ENCODE measurements at regions of chr14 and their contacts with region 1.

Region 1: DNA sequence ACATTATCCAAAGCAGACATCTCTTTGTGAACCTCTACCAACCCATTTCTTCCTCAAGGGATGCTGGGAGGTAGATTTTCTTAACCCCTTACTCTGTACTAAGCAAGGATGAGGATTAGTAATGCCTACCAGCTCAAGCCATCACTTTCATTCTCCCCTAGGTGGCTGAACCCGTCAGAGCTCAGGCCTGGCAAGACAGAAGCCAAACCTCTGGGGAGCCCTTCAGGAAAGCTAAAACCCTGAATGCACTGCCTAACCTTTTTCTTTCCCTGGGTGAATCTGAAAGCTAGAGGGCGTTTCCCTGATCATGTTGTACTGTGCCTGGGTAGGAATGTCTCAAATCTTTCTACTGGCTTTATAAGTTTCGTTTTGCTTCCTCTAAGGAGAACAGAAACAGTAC is 617.3 kb downstream of the RPL10L start:
- DNase-seq: no peak
- H3K4me3 ChIP-seq: no peak overlapping the region
- H3K27ac ChIP-seq: no peak overlapping the region
- H3K4me1 ChIP-seq: no peaks in the 10 kb centered on the region
- H3K27me3 ChIP-seq: no peaks in the 10 kb centered on the region
- CTCF ChIP-seq: no peak
- EP300 ChIP-seq: no peak
- POLR2A ChIP-seq: no peak

Region 2: GRCh38 chr14:45785240-45785639 is 249.1 kb before region 1 on chr14:
- intact Hi-C with region 1: no loop called
- DNase-seq: no peak
- H3K4me3 ChIP-seq: no peak overlapping the region
- H3K27ac ChIP-seq: no peak overlapping the region
- H3K4me1 ChIP-seq: no peaks in the 10 kb centered on the region
- H3K27me3 ChIP-seq: no peaks in the 10 kb centered on the region
- CTCF ChIP-seq: no peak
- EP300 ChIP-seq: no peak
- POLR2A ChIP-seq: no peak

Region 3: DNA sequence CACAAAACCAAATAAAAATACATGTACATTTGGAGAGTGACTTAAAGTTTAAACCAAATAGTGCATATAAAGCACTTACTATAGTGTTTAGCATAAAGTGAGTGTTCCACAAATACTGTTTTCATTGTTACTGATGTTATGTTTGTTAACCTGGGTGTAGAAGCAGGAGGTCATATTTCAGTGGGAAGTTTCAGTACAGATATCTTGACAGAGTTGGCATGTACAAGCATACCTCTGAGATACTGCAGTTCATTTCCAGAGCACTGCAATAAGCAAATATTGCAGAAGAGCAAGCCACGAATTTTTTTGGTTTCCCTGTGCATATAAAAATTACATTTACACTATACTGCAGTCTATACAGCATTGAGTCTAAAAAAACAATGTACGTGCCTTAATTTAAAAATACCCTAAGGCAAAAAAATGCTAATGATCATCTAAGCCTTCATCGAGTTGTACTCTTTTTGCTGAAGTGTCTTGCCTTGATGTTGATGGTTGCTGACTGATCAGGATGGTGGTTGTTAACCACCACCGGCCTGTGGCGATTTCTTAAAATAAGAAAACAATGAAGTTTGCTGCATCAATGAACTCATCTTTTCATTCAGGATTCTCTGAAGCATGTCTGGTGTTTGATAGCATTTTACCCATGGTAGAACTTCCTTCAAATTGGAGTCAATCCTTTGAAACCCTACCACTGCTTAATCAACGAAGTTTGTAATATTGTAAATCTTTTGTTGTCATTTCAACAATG is 978.4 kb after region 1 on chr14:
- intact Hi-C with region 1: loop called (anchors 10 kb)
- DNase-seq: no peak
- H3K4me3 ChIP-seq: no peak overlapping the region
- H3K27ac ChIP-seq: no peak overlapping the region
- H3K4me1 ChIP-seq: no peaks in the 10 kb centered on the region
- H3K27me3 ChIP-seq: no peaks in the 10 kb centered on the region
- CTCF ChIP-seq: no peak
- EP300 ChIP-seq: no peak
- POLR2A ChIP-seq: no peak